Colonic mucosa (tissue), 4 donors: ENCODE measurements at regions of chr5 and their contacts with region 1.

Region 1: DNA sequence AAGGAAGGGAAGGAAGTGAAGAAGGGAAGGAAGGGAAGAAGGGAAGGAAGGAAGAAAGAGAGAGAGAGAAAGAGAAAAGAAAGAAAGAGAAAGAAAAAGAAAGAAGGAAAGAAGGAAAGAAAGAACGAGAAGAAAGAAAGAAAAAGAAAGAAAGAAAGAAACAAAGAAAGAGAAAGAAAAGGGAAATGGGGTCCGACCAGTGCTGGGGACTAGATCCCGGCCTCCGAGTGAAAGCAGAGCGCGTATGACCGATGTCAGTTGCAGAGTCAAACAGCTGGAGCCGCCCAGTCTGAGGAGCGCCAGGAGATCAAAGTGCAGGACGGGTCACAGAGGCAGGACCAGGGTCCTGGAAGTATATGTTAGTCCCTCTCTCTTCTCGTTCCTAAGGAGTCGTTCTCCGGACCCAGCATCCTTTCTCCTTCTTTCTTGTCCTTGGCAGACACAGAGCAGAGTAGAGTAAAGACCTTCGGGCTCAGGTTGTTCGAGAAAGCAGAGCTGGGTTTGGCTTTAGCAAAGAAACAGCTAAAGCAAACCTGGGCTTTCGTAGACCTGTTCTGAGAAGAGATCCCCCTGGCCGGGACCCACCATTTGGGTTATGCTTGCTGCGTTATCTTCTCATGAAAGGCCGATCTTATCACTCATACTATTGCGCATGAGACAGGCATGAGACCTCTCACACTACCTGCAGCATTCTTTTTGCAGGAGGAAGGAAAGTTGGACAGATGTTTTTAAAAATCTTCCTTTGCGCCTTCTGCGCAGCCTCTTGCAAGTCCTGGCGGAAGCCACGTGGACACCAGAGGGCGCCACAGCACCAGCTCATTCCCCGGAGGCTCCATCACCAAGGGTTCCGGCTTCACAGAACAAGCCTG is 305.2 kb upstream of the MSX2 start:
- DNase-seq: peak; percentile 85
- H3K4me3 ChIP-seq: no peak overlapping the region
- H3K27ac ChIP-seq: no peak overlapping the region
- H3K4me1 ChIP-seq: no peaks in the 10 kb centered on the region
- H3K27me3 ChIP-seq: no peaks in the 10 kb centered on the region
- CTCF ChIP-seq: peak; percentile 87

Region 2: GRCh38 chr5:173972925-173973615 is 446.1 kb before region 1 on chr5:
- intact Hi-C with region 1: no loop called
- DNase-seq: peak; percentile 86
- H3K4me3 ChIP-seq: peak overlapping the region; percentile 40
- H3K27ac ChIP-seq: no peak overlapping the region
- H3K4me1 ChIP-seq: no peaks in the 10 kb centered on the region
- H3K27me3 ChIP-seq: no peaks in the 10 kb centered on the region
- CTCF ChIP-seq: peak; percentile 89

Region 3: DNA sequence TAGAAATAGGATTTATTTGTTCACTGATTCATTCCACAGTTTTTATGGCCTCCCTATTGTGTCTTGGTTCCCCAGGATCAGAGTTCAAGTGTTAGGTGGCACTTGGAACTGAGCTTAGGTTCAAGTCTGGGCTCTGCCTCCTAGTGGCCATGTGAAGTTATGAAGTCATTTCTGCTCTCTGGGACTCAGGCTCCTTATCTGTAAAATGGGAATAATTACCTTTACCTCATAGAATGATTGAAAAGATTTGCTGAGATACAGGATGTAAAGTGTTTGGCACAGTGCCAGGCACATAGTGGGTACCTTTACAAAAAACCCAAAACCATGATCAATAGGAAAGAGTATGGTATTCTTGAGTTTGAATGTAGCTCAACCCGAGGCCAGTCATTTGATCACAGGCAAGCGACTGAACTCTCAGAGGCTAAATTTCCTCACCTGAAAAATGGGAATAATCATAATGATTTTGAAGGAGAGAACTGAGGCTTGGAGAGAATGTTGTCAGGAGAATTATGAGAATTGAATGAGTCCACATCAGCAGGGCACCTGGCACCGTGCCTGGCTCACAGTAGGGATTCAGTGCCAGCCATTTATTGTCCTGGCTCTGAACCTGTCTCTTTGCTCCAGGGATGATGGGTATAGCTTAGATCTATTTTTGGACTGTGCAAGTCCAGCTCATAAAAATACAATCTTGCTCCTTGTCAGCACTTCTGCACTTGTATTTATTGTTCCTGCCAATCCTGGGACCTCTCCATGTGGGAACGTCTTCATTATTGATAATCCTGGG is 362.9 kb before region 1 on chr5:
- intact Hi-C with region 1: no loop called
- DNase-seq: no peak
- H3K4me3 ChIP-seq: no peak overlapping the region
- H3K27ac ChIP-seq: no peak overlapping the region
- H3K4me1 ChIP-seq: no peaks in the 10 kb centered on the region
- H3K27me3 ChIP-seq: no peaks in the 10 kb centered on the region
- CTCF ChIP-seq: no peak

Region 4: DNA sequence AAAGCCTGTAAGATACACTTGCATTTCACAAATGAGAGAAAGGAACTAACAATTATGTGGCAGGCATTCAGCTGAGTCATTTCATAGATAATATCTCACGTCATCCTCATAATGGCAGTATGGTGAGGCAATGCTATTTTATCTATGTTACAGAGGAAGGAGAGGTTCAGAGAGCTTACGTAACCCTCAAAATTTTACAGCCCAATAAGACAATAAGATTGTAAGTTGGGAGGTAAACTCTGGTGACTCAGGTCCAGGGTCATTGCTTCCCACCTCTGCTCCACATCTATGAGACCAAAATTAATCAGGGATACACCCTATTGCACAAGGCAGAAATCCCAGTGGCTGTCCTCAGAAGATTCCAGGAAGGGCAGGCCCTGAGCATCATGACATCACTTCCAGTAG is 64.0 kb before region 1 on chr5:
- intact Hi-C with region 1: no loop called
- DNase-seq: no peak
- H3K4me3 ChIP-seq: no peak overlapping the region
- H3K27ac ChIP-seq: no peak overlapping the region
- H3K4me1 ChIP-seq: no peaks in the 10 kb centered on the region
- H3K27me3 ChIP-seq: no peaks in the 10 kb centered on the region
- CTCF ChIP-seq: no peak

Region 5: GRCh38 chr5:174793684-174794328 is 374.6 kb after region 1 on chr5:
- intact Hi-C with region 1: loop called (anchors 1 kb)
- DNase-seq: peak; percentile 45
- H3K4me3 ChIP-seq: no peak overlapping the region
- H3K27ac ChIP-seq: no peak overlapping the region
- H3K4me1 ChIP-seq: no peaks in the 10 kb centered on the region
- H3K27me3 ChIP-seq: no peaks in the 10 kb centered on the region
- CTCF ChIP-seq: peak; percentile 63